Activated CD8-positive, alpha-beta T cell treated with anti-CD3 and anti-CD28 coated beads, Interleukin-2, amount 10 ng/mL, durations not matched to agents 7 days and 5 days (primary cell): ENCODE measurements at regions of chr11 and their contacts with region 1.

Region 1: GRCh38 chr11:117946842-117947526 is 17.8 kb upstream of the TMPRSS13 start:
- DNase-seq: peak; percentile 89
- ATAC-seq: peak; percentile 34
- H3K4me3 Mint-ChIP-seq: no peak overlapping the region
- H3K27ac Mint-ChIP-seq: peak overlapping the region; percentile 76
- H3K4me1 Mint-ChIP-seq: peaks cover 90% of the 10 kb centered on the region
- H3K27me3 Mint-ChIP-seq: no peaks in the 10 kb centered on the region

Region 2: GRCh38 chr11:117621226-117621625 is 325.8 kb before region 1 on chr11:
- CTCF ChIA-PET with region 1: no interaction called
- POLR2A ChIA-PET with region 1: no interaction called
- DNase-seq: peak; percentile 26
- ATAC-seq: no peak
- H3K4me3 Mint-ChIP-seq: no peak overlapping the region
- H3K27ac Mint-ChIP-seq: no peak overlapping the region
- H3K4me1 Mint-ChIP-seq: no peaks in the 10 kb centered on the region
- H3K27me3 Mint-ChIP-seq: peaks cover 5% of the 10 kb centered on the region

Region 3: DNA sequence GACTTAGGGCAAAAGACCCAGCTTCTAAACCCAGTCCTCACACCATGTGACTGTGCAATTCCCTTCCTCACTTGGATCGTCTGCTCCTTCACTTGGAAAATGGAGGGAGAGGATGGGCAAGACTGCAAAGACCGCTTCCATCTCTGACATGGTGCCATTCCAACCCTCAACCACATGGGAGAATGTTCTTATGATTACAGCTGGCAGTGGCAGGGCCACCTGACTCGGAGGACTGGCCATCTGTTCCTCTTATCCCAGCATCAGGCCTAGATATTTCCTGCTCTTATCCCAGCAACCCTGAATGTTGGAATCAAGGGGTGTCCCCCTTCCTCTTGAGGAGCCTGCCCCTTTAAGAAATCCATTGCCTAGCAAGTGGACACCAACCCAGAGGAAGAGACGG is 165.4 kb before region 1 on chr11:
- CTCF ChIA-PET with region 1: no interaction called
- POLR2A ChIA-PET with region 1: no interaction called
- DNase-seq: no peak
- ATAC-seq: no peak
- H3K4me3 Mint-ChIP-seq: no peak overlapping the region
- H3K27ac Mint-ChIP-seq: no peak overlapping the region
- H3K4me1 Mint-ChIP-seq: no peaks in the 10 kb centered on the region
- H3K27me3 Mint-ChIP-seq: peaks cover 19% of the 10 kb centered on the region

Region 4: GRCh38 chr11:117828611-117829368 is 118.2 kb before region 1 on chr11:
- CTCF ChIA-PET with region 1: interaction called, 436 read pairs
- POLR2A ChIA-PET with region 1: interaction called, 28 read pairs
- DNase-seq: peak; percentile 92
- ATAC-seq: peak; percentile 88
- H3K4me3 Mint-ChIP-seq: peak overlapping the region; percentile 48
- H3K27ac Mint-ChIP-seq: peak overlapping the region; percentile 90
- H3K4me1 Mint-ChIP-seq: peaks cover 83% of the 10 kb centered on the region
- H3K27me3 Mint-ChIP-seq: no peaks in the 10 kb centered on the region

Region 5: DNA sequence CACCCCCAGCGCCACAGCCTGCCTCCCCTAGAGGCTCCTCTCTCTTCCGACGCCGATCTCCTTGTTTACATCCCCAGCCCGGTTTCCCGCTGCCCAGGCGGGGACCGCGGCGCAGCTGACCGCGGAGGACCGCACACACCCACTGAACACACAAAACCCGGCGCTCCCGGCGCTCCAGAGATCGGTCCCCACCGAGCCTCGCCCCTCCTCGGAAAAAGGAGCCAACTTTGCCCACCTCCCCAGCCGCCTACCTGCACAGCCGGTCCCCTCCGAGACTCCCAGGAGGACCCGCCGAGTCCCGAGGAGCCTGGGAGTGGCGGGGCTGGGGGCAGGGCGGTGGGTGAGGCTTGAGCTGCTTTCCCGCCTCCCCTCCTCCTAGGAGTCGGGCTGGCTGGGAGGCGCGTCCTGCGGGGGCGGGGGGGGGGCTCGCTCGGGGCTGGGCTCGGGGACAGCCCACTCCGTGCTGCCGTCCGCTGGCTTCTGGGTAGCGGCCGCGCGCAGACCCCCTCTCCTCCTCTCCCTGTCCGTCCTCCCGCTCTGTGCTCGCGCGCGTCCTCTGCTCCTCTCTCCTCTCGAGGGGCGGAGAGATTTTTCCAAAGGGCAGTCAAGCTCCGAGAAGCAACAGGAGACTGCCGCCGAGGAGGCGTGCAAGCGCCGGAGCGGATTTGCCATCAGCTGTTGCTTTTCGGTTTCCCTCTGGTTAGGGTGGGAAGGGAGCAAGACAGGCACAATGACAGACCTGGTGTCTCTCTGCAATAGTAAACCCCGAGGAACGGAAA is 70.5 kb before region 1 on chr11 and contains the start of gene FXYD6:
- CTCF ChIA-PET with region 1: interaction called, 10 read pairs
- POLR2A ChIA-PET with region 1: no interaction called
- DNase-seq: no peak
- ATAC-seq: peak; percentile 24
- H3K4me3 Mint-ChIP-seq: peak within 1 kb of the TSS; percentile 75
- H3K27ac Mint-ChIP-seq: peak within 1 kb of the TSS; percentile 28
- H3K4me1 Mint-ChIP-seq: peaks cover 50% of the 10 kb centered on the region
- H3K27me3 Mint-ChIP-seq: peaks cover 62% of the 10 kb centered on the region
- total RNA-seq, gene FXYD6: 0.24 TPM in 1 of 2 experiments, not detected in the other

Region 6: GRCh38 chr11:117970400-117971024 is 23.5 kb after region 1 on chr11:
- CTCF ChIA-PET with region 1: interaction called, 401 read pairs
- POLR2A ChIA-PET with region 1: interaction called, 66 read pairs
- DNase-seq: peak; percentile 56
- ATAC-seq: peak; percentile 59
- H3K4me3 Mint-ChIP-seq: no peak overlapping the region
- H3K27ac Mint-ChIP-seq: peak overlapping the region; percentile 47
- H3K4me1 Mint-ChIP-seq: peaks cover 66% of the 10 kb centered on the region
- H3K27me3 Mint-ChIP-seq: no peaks in the 10 kb centered on the region

Region 7: DNA sequence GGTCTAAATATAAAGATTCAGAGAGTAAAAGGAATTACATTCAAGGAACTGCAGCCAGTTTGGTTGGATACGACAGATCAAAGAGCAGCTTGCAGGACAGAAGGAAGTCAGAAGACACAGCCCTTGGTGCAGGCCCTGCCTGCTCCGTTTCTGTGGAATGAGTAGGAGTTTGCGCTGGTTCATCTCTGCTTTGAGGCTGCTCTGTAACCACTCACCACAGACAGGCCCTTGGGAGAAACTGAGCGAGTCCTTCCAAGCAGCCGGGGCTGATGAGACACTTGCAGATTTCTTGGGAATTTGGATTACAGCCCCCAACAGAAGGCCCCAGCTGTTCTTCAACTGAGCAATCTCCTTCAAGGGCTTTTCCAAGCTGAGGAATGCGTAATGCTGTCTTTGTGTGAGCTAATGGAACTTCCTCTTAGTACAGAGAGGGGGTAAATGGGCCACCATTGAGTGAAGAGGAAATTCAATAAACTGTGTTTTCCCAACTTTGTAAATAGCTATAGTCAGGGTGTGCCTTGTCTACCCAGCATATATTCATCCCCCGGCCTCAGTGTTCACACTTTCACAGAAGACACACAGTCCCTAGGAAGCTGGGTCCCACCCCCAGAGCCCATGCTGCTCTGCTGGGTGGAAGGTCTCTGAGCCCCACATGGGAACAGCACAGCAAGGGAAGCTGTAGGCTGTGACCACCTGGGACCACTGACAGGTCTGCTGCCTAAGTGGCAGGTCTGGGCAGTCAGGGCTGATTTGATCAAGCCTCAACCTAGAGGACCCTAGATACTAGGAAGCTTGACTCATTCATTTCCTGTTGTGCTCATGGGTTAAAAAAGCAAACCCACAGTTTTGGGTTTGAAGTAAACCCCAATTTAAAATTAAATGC is 55.8 kb after region 1 on chr11:
- CTCF ChIA-PET with region 1: interaction called, 52 read pairs
- POLR2A ChIA-PET with region 1: interaction called, 109 read pairs
- DNase-seq: peak; percentile 70
- ATAC-seq: peak; percentile 52
- H3K4me3 Mint-ChIP-seq: peak overlapping the region; percentile 72
- H3K27ac Mint-ChIP-seq: peak overlapping the region; percentile 98
- H3K4me1 Mint-ChIP-seq: peaks cover 100% of the 10 kb centered on the region
- H3K27me3 Mint-ChIP-seq: no peaks in the 10 kb centered on the region

Region 8: DNA sequence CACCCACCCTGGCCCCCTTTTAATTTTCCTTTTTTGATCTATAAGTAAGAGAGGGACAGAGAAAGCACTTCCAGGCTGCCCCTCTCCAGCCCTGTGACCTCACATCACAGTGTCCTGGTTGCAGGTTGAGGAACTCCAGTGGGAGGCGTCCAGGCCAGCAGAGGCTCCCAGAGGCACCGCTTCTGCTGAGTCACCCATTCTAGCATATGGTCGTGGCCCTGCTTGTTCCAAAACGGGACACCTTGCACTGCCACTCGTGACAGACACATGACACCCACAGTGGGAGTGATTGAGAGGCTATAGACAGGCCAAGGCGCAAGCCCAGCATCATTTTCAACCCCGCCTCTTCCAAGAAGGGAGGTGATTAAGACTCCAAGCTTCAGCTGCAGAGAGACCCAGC is 113.9 kb after region 1 on chr11:
- CTCF ChIA-PET with region 1: interaction called, 432 read pairs
- POLR2A ChIA-PET with region 1: no interaction called
- DNase-seq: no peak
- ATAC-seq: no peak
- H3K4me3 Mint-ChIP-seq: no peak overlapping the region
- H3K27ac Mint-ChIP-seq: no peak overlapping the region
- H3K4me1 Mint-ChIP-seq: peaks cover 22% of the 10 kb centered on the region
- H3K27me3 Mint-ChIP-seq: peaks cover 10% of the 10 kb centered on the region